MCF 10A (cell line): ENCODE measurements at regions of chr17 and their contacts with region 1.

Region 1: GRCh38 chr17:30236766-30237165 is 1.3 kb upstream of the SLC6A4 start:
- DNase-seq: peak; percentile 57
- H3K4me3 Mint-ChIP-seq: peak overlapping the region; percentile 35
- H3K27ac Mint-ChIP-seq: no peak overlapping the region
- H3K4me1 Mint-ChIP-seq: peaks cover 9% of the 10 kb centered on the region
- H3K27me3 Mint-ChIP-seq: peaks cover 57% of the 10 kb centered on the region
- CTCF ChIP-seq: peak; percentile 37

Region 2: GRCh38 chr17:30124273-30124796 is 112.4 kb before region 1 on chr17:
- CTCF ChIA-PET with region 1: interaction called, 5 read pairs
- POLR2A ChIA-PET with region 1: interaction called, 3 read pairs
- intact Hi-C with region 1: loop called (anchors 1 kb)
- DNase-seq: no peak
- H3K4me3 Mint-ChIP-seq: no peak overlapping the region
- H3K27ac Mint-ChIP-seq: peak overlapping the region; percentile 61
- H3K4me1 Mint-ChIP-seq: peaks cover 29% of the 10 kb centered on the region
- H3K27me3 Mint-ChIP-seq: no peaks in the 10 kb centered on the region
- CTCF ChIP-seq: no peak

Region 3: DNA sequence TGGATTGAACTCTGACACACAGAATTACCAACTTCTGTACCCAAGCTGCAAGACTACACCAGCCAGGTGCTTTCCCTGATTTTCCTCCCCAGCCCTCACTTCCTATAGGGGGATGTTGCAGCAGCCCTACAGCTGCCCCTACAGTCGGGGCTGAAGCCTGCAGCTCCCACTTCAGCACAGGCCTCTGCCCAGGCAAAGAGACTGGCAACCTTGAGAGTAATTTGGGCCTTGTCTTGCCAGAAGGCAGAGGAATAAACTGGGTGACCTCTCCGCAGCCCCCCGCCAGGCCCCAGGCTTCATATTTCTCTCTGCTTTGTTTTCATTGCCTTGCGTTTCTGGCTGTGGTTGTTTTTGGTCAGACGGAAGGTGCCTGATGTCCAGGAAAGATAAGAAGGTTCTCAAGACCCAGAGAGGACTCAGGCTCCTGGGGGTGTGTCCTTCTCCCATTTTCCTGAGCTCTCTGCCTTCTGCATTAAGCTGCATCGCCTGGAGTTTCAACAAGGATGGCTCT is 33.2 kb before region 1 on chr17:
- CTCF ChIA-PET with region 1: no interaction called
- POLR2A ChIA-PET with region 1: no interaction called
- intact Hi-C with region 1: no loop called
- DNase-seq: no peak
- H3K4me3 Mint-ChIP-seq: no peak overlapping the region
- H3K27ac Mint-ChIP-seq: no peak overlapping the region
- H3K4me1 Mint-ChIP-seq: no peaks in the 10 kb centered on the region
- H3K27me3 Mint-ChIP-seq: peaks cover 28% of the 10 kb centered on the region
- CTCF ChIP-seq: no peak